Activated CD4-positive, alpha-beta memory T cell treated with anti-CD3 and anti-CD28 coated beads, Interleukin-2, amount 10 ng/mL, durations not matched to agents 7 days and 5 days (primary cell): ENCODE measurements at regions of chr2 and their contacts with region 1.

Region 1: DNA sequence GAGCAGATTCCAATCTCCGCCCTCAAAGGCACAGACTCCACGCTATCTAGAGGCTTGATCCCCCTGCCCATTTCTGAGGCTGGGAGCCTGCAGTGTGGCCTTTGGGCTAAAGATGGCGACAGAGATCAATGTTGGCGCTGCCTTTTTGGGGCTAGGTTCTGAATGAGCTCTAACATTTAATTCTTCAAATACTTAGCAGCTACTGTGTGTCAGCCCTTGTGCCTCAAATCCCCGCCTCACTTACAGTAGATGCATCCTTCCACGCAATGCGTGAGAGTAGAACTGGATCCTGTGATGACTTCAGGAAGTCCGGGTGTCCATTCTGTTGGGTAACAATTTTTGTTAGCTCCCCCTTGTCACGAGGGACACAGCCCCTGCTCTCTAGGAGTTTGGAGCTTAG is 12.4 kb downstream of the IL1F10 start:
- DNase-seq: peak; percentile 60
- H3K4me3 Mint-ChIP-seq: no peak overlapping the region
- H3K27ac Mint-ChIP-seq: no peak overlapping the region
- H3K4me1 Mint-ChIP-seq: peaks cover 6% of the 10 kb centered on the region
- H3K27me3 Mint-ChIP-seq: peaks cover 15% of the 10 kb centered on the region

Region 2: DNA sequence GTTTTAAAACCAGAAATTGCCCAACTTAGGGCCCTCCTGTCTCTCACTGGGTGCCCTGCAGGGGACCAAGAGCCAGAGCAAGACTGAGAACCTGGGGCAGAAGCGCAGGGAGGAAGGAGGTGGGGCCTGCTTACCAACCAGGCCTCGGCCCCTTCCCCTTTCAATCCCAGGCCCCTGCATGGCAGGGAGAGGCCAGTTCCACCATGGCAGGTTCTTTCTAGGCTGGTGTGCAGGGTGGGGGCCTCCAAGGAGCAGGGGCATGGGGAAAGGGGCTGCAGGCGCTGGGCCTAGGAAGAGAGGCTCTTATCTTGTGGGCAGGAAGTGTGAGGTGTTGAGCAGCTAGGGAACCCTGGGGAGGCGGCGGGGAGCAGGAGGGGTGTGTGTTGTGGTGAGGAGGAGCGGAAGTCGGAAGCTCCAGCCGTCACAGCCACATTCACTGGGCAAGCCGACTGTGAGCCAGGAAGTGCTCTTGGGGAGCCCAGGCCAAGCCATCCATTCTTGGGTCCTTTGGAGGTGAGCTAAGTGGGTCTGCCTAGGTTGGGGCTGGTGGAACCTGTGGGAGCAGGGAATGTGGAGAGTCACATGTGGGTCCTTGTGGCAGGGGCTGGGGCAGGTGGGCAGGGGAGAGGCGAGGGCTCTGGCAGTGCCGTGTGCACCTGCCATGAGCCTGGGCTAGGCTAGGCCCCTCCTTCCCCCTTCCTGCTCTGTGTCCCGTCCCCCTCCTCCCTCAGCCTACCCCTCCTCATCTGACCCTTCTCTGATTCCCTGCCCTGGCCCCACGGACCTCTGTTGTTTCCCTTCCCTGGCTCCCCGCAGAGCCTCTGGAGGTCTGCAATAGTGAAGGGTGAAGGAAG is 93.6 kb after region 1 on chr2 and contains the start of gene PSD4:
- CTCF ChIA-PET with region 1: interaction called, 17 read pairs
- POLR2A ChIA-PET with region 1: interaction called, 5 read pairs
- DNase-seq: peak; percentile 95
- H3K4me3 Mint-ChIP-seq: peak within 1 kb of the TSS; percentile 80
- H3K27ac Mint-ChIP-seq: peak within 1 kb of the TSS; percentile 85
- H3K4me1 Mint-ChIP-seq: peaks cover 73% of the 10 kb centered on the region
- H3K27me3 Mint-ChIP-seq: no peaks in the 10 kb centered on the region
- total RNA-seq, gene PSD4: 261 to 272 TPM

Region 3: DNA sequence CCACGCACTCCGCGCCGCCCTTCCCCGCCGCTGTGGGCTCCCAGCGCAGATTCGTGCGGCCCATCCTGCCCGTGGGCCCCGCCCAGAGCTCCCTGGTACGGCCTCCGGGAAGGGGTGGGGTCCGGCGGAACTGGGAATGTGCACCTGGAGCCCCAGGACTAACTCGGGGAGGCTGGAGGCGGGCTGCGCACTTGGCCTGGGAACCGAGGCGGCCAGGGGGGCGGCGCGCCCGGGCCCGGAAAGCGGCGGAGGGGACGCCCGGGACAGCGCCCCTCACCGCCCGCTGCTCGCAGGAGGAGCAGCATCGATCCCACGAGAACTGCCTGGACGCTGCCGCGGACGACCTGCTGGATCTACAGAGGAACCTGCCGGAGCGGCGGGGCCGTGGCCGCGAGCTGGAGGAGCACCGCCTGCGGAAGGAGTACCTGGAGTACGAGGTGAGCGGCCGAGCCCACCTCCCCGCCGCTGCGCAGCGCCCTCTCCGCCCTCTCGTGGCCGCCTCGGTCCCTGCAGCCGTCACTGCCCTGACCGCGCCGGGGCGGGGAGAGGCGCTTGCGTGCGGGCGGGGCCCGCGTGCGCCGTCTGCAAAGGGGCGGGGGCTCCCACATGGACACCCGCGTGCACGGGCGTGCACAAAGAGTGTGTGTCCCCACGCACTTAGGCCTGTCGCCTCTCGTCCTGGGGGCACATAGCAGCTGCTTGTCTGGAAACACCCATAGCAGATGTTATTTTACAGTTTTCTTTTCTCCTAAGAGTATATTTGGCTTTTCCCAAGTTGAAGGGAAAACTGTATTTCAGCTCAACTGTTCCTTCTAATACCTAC is 118.9 kb after region 1 on chr2:
- CTCF ChIA-PET with region 1: interaction called, 22 read pairs
- POLR2A ChIA-PET with region 1: interaction called, 4 read pairs
- DNase-seq: peak; percentile 82
- H3K4me3 Mint-ChIP-seq: no peak overlapping the region
- H3K27ac Mint-ChIP-seq: no peak overlapping the region
- H3K4me1 Mint-ChIP-seq: peaks cover 48% of the 10 kb centered on the region
- H3K27me3 Mint-ChIP-seq: no peaks in the 10 kb centered on the region

Region 4: GRCh38 chr2:113248997-113249770 is 169.1 kb after region 1 on chr2:
- CTCF ChIA-PET with region 1: interaction called, 11 read pairs
- POLR2A ChIA-PET with region 1: no interaction called
- DNase-seq: peak; percentile 82
- H3K4me3 Mint-ChIP-seq: no peak overlapping the region
- H3K27ac Mint-ChIP-seq: peak overlapping the region; percentile 82
- H3K4me1 Mint-ChIP-seq: peaks cover 58% of the 10 kb centered on the region
- H3K27me3 Mint-ChIP-seq: no peaks in the 10 kb centered on the region